CD4-positive, alpha-beta T cell (primary cell): ENCODE measurements at regions of chr3 and their contacts with region 1.

Region 1: DNA sequence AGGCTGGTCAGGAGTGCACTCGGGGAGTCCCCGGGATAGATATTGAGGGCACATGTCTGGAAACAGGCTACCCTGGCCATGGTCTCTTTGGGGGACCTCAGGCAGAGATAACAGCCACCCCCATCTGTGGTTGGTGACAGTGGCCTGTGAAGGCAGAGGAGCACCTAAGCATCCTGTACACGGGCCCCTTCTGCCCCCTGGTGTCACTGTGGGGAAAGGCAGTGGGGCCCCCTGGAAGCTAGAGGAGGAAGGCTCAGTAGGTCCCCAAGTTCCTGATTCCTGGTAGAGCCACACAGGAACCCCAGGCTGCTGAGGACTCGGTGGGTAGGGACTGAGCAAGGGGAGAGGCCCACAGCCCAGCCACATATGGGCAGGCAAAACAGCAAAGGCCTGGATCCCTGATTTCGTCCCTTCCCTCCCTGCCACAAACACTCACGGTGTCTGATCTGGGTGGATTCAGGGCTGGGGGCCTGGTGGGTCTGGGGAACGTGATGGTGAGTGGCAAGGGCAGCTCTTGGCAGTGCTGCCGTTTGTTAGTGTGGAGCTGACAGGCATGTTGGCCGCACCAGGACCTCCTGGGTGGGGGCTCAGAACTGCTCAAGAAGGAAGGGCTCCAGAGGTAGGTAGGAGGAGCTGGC is 14.1 kb upstream of the CXCR6 start:
- DNase-seq: peak; percentile 49 to 79 (median 62)
- ATAC-seq: peak; percentile 99
- H3K4me3 ChIP-seq: no peak overlapping the region
- H3K4me3 Mint-ChIP-seq: no peak overlapping the region
- H3K27ac ChIP-seq: no peak overlapping the region
- H3K27ac Mint-ChIP-seq: peak overlapping the region; percentile 30
- H3K4me1 ChIP-seq: peaks cover 7% of the 10 kb centered on the region
- H3K4me1 Mint-ChIP-seq: peaks cover 5% of the 10 kb centered on the region
- H3K27me3 ChIP-seq: no peaks in the 10 kb centered on the region
- H3K27me3 Mint-ChIP-seq: no peaks in the 10 kb centered on the region
- CTCF ChIP-seq: peak; percentile 72

Region 2: GRCh38 chr3:44529927-44530326 is 1399.2 kb before region 1 on chr3:
- CTCF ChIA-PET with region 1: no interaction called
- POLR2A ChIA-PET with region 1: no interaction called
- intact Hi-C with region 1: no loop called
- DNase-seq: peak in 5 of 14 experiments; percentile 6 to 27 (median 19)
- ATAC-seq: no peak
- H3K4me3 ChIP-seq: no peak overlapping the region
- H3K4me3 Mint-ChIP-seq: no peak overlapping the region
- H3K27ac ChIP-seq: no peak overlapping the region
- H3K27ac Mint-ChIP-seq: no peak overlapping the region
- H3K4me1 ChIP-seq: no peaks in the 10 kb centered on the region
- H3K4me1 Mint-ChIP-seq: no peaks in the 10 kb centered on the region
- H3K27me3 ChIP-seq: peaks cover 4 to 10% of the 10 kb centered on the region in 2 experiments
- H3K27me3 Mint-ChIP-seq: peaks cover 36% of the 10 kb centered on the region
- CTCF ChIP-seq: no peak

Region 3: GRCh38 chr3:45043728-45044299 is 885.3 kb before region 1 on chr3:
- CTCF ChIA-PET with region 1: no interaction called
- POLR2A ChIA-PET with region 1: no interaction called
- intact Hi-C with region 1: loop called in 1 of 2 experiments (anchors 10 kb)
- DNase-seq: peak in 2 of 14 experiments; percentile 43 to 51
- ATAC-seq: no peak
- H3K4me3 ChIP-seq: no peak overlapping the region
- H3K4me3 Mint-ChIP-seq: no peak overlapping the region
- H3K27ac ChIP-seq: no peak overlapping the region
- H3K27ac Mint-ChIP-seq: no peak overlapping the region
- H3K4me1 ChIP-seq: peaks cover 17% of the 10 kb centered on the region
- H3K4me1 Mint-ChIP-seq: peaks cover 21% of the 10 kb centered on the region
- H3K27me3 ChIP-seq: peaks cover 0 to 7% of the 10 kb centered on the region in 2 experiments
- H3K27me3 Mint-ChIP-seq: no peaks in the 10 kb centered on the region
- CTCF ChIP-seq: no peak

Region 4: GRCh38 chr3:45507820-45508317 is 421.3 kb before region 1 on chr3:
- CTCF ChIA-PET with region 1: interaction called, 6 read pairs
- POLR2A ChIA-PET with region 1: no interaction called
- intact Hi-C with region 1: loop called (anchors 1 to 2 kb)
- DNase-seq: peak in 1 of 14 experiments; percentile 22
- ATAC-seq: peak; percentile 56
- H3K4me3 ChIP-seq: no peak overlapping the region
- H3K4me3 Mint-ChIP-seq: no peak overlapping the region
- H3K27ac ChIP-seq: no peak overlapping the region
- H3K27ac Mint-ChIP-seq: no peak overlapping the region
- H3K4me1 ChIP-seq: peaks cover 10% of the 10 kb centered on the region
- H3K4me1 Mint-ChIP-seq: peaks cover 15% of the 10 kb centered on the region
- H3K27me3 ChIP-seq: no peaks in the 10 kb centered on the region
- H3K27me3 Mint-ChIP-seq: no peaks in the 10 kb centered on the region
- CTCF ChIP-seq: no peak

Region 5: GRCh38 chr3:45665101-45665572 is 264.0 kb before region 1 on chr3:
- CTCF ChIA-PET with region 1: interaction called, 3 read pairs
- POLR2A ChIA-PET with region 1: no interaction called
- intact Hi-C with region 1: loop called in 1 of 2 experiments (anchors 5 kb)
- DNase-seq: peak; percentile 40 to 90 (median 59)
- ATAC-seq: peak; percentile 54
- H3K4me3 ChIP-seq: peak overlapping the region; percentile 60
- H3K4me3 Mint-ChIP-seq: peak overlapping the region; percentile 89
- H3K27ac ChIP-seq: peak overlapping the region; percentile 37 to 71
- H3K27ac Mint-ChIP-seq: peak overlapping the region; percentile 88
- H3K4me1 ChIP-seq: peaks cover 26% of the 10 kb centered on the region
- H3K4me1 Mint-ChIP-seq: peaks cover 25% of the 10 kb centered on the region
- H3K27me3 ChIP-seq: no peaks in the 10 kb centered on the region
- H3K27me3 Mint-ChIP-seq: no peaks in the 10 kb centered on the region
- CTCF ChIP-seq: peak; percentile 77

Region 6: DNA sequence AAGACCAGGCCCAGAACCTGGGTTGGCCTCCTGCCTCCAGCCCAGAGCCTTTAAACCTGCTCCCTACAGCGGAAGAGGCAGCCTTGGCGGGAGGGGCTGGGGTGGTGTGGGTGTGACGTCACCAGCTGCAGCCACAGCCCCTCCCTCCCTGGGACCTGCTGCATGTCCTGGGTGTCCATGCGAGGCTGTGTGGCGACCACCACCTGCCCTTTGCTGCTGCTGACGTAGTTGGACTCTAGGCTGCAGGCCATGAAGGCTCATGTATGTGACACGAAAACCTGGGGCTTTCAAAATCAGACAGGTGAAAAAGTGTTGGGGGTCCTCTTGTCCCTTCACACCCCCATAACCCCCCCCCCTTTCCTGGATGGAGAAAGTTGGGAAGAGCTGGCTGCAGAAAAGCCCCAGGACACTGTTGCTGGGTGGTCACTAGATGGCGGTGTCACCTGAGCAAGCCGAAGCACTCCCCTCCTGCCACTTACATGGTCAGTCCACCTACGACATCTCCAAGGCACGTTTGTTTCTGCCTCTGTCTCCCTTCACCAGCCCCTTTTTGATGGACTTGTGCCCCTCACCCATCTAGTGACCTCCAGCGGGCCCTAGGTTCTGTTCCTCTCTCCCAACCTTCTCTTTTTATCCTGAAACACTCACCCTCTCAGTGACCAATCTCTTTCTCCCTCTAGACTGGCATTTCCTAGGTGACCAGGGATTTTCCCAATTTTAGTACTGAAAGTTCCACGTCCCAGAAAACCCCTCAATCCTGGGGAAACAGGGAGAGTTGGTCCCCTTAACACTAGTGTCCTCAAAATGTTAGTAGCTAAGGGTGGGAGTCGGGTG is 168.1 kb before region 1 on chr3:
- CTCF ChIA-PET with region 1: interaction called, 18 read pairs
- POLR2A ChIA-PET with region 1: no interaction called
- intact Hi-C with region 1: loop called (anchors 1 kb)
- DNase-seq: peak in 12 of 14 experiments; percentile 14 to 74 (median 26)
- ATAC-seq: peak; percentile 54
- H3K4me3 ChIP-seq: no peak overlapping the region
- H3K4me3 Mint-ChIP-seq: no peak overlapping the region
- H3K27ac ChIP-seq: no peak overlapping the region
- H3K27ac Mint-ChIP-seq: no peak overlapping the region
- H3K4me1 ChIP-seq: peaks cover 6% of the 10 kb centered on the region
- H3K4me1 Mint-ChIP-seq: no peaks in the 10 kb centered on the region
- H3K27me3 ChIP-seq: peaks cover 0 to 3% of the 10 kb centered on the region in 2 experiments
- H3K27me3 Mint-ChIP-seq: no peaks in the 10 kb centered on the region
- CTCF ChIP-seq: peak; percentile 72